ENCODE measurements at regions of chr7 and their contacts with region 1.

Region 1: DNA sequence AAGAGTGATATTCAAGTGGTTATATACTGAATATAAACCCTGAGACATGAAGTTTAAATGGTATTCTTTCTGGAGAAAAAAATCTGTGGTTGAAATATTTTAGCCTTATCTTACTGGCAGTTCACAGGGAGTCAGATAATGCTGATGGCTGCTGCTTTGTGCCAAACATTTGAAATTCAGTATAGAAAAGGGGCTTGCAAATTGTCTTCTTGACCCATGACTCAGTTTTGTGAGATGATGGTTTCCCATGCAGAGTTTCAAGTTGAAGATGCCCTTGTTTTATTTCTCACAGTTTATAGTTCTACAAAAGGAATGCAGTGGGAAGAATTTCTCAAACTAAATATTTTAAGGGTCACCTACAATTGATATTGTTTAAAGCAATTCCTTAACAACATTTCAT is 251.1 kb upstream of the MEOX2 start:
- DNase-seq: no peak

Region 2: GRCh38 chr7:15998617-15999016 is 61.0 kb after region 1 on chr7:
- in situ Hi-C with region 1: loop called (anchors 10 kb)
- DNase-seq: no peak

Region 3: GRCh38 chr7:16114633-16115032 is 177.1 kb after region 1 on chr7:
- in situ Hi-C with region 1: no loop called
- DNase-seq: peak; percentile 58

Measured in SK-MEL-5 (cell line).